Caco-2 (cell line): ENCODE measurements at regions of chr5 and their contacts with region 1.

Region 1: DNA sequence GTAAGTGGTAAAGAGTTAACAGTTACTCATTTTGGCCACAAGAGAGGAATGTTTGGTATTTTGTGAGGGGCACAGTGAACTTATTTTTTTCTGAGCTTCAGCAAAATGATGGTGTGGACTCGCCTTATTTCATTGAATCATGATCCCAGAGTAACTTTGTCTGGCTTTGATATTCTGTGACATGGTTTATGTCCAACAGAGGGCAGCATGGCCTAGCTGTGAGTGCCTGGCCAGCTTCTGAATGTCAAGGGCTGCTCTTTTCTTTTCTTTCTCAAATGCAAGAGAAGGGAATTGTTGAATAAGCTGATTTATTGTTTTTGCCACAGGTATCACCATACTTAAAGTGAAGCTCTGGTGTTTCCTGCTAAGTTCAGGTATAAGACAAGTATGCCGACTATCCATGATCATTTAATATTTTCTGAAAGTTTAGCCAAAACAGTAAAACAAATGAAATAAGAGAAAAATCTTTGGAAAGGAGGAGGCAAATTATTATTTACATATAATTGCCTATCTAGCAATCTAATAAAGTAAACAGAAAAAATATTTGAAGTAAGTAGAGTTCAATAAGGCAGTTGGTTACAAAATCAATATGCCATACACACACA is 31.7 kb downstream of the MRPL22 start:
- DNase-seq: peak in 1 of 2 experiments; percentile 50
- H3K4me3 ChIP-seq: no peak overlapping the region
- H3K4me3 Mint-ChIP-seq: no peak overlapping the region
- H3K27ac Mint-ChIP-seq: no peak overlapping the region
- H3K4me1 ChIP-seq: no peaks in the 10 kb centered on the region
- H3K4me1 Mint-ChIP-seq: no peaks in the 10 kb centered on the region
- H3K27me3 ChIP-seq: no peaks in the 10 kb centered on the region
- H3K27me3 Mint-ChIP-seq: no peaks in the 10 kb centered on the region
- CTCF ChIP-seq: peak; percentile 64 to 80

Region 2: GRCh38 chr5:154754460-154755360 is 217.9 kb before region 1 on chr5:
- CTCF ChIA-PET with region 1: no interaction called
- POLR2A ChIA-PET with region 1: no interaction called
- intact Hi-C with region 1: no loop called
- DNase-seq: peak; percentile 100
- H3K4me3 ChIP-seq: peak overlapping the region; percentile 68
- H3K4me3 Mint-ChIP-seq: peak overlapping the region; percentile 85
- H3K27ac Mint-ChIP-seq: peak overlapping the region; percentile 90
- H3K4me1 ChIP-seq: peaks cover 18% of the 10 kb centered on the region
- H3K4me1 Mint-ChIP-seq: peaks cover 22% of the 10 kb centered on the region
- H3K27me3 ChIP-seq: no peaks in the 10 kb centered on the region
- H3K27me3 Mint-ChIP-seq: no peaks in the 10 kb centered on the region
- CTCF ChIP-seq: peak; percentile 42 to 62

Region 3: DNA sequence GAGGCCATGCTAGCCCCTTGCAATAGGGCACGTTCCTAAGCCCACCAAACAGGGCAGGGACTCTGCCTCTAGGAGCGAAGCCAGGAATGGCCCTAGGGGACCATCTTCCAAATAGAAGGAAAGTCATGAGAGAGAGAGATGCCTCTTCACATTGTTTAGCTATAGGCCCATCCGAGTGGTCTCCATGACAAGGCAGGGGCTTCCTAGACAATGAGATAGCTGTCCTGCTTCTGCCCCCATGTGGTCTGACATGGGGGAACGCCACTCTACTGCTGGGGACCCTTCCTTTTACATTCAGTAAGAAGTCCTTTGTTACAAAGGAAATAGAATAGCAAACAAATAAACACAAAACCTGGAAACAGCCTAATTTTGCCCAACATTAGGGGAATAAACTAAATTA is 23.1 kb after region 1 on chr5:
- CTCF ChIA-PET with region 1: interaction called, 10 read pairs
- POLR2A ChIA-PET with region 1: no interaction called
- intact Hi-C with region 1: loop called (anchors 2 kb)
- DNase-seq: no peak
- H3K4me3 ChIP-seq: no peak overlapping the region
- H3K4me3 Mint-ChIP-seq: no peak overlapping the region
- H3K27ac Mint-ChIP-seq: no peak overlapping the region
- H3K4me1 ChIP-seq: no peaks in the 10 kb centered on the region
- H3K4me1 Mint-ChIP-seq: no peaks in the 10 kb centered on the region
- H3K27me3 ChIP-seq: no peaks in the 10 kb centered on the region
- H3K27me3 Mint-ChIP-seq: no peaks in the 10 kb centered on the region
- CTCF ChIP-seq: peak in 1 of 2 experiments; percentile 24

Region 4: DNA sequence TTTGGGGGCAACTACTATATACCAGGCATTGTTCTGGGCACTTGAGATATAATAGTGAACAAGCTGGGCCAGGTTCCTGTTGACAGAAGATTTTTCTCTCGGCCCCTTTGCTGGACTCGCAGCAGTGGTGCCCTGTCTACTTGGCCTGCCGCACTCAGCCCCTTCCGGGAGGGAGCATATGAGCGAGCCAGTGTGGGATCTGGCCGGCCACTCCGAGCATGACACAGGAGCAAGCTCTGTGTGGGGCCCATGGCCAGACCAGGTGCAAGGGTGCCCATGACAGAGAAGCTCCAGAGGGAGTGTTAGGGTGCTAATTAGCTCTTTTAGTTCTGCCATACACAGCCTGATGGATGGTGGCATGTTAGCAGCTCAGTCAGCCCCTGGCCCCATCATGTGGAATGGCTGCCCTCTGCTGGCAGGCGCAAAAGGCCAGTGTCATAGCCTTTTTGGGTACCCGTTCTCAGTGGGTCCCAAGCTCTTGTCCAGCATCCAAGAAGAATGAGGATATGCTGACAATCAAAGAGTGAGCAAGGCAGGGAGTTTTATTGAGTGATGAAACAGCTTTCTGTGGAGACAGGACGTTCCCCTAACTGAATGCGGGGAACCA is 31.7 kb after region 1 on chr5:
- CTCF ChIA-PET with region 1: interaction called, 14 read pairs
- POLR2A ChIA-PET with region 1: no interaction called
- intact Hi-C with region 1: loop called (anchors 2 kb)
- DNase-seq: peak in 1 of 2 experiments; percentile 39
- H3K4me3 ChIP-seq: no peak overlapping the region
- H3K4me3 Mint-ChIP-seq: no peak overlapping the region
- H3K27ac Mint-ChIP-seq: no peak overlapping the region
- H3K4me1 ChIP-seq: no peaks in the 10 kb centered on the region
- H3K4me1 Mint-ChIP-seq: no peaks in the 10 kb centered on the region
- H3K27me3 ChIP-seq: no peaks in the 10 kb centered on the region; the same call in 1 of the 2 replicates
- H3K27me3 Mint-ChIP-seq: peaks cover 6% of the 10 kb centered on the region
- CTCF ChIP-seq: peak; percentile 48 to 50

Region 5: DNA sequence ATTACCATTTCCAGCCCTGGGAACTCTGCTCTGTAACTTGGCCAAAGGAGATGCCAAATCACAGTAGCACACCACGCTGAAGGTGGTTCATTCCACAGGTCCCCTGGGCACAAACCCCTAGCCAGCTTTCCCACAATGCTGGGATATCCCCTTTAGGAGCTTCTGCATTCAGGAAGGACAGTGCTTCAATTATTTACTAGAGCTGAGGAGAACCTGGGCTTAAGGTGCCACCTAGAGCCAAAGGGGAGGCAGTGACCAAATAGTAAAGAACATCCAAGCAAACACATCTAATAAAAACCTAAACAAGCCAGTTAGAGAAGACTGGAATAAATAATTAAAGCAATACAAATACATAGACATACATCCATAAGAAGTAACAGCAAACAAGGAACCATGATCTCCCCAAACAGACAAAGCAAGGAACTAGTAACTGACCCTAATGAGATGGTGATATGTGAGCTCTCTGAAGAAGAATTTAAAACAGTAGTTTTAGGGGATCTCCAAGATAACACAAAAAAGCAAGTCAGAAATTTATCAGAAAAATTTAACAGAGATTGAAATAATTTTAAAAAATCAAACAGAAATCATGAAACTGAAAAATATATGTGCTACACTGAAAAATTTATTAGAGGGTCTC is 55.5 kb after region 1 on chr5:
- CTCF ChIA-PET with region 1: interaction called, 21 read pairs
- POLR2A ChIA-PET with region 1: no interaction called
- intact Hi-C with region 1: loop called (anchors 1 kb)
- DNase-seq: peak in 1 of 2 experiments; percentile 48
- H3K4me3 ChIP-seq: no peak overlapping the region
- H3K4me3 Mint-ChIP-seq: no peak overlapping the region
- H3K27ac Mint-ChIP-seq: no peak overlapping the region
- H3K4me1 ChIP-seq: no peaks in the 10 kb centered on the region
- H3K4me1 Mint-ChIP-seq: no peaks in the 10 kb centered on the region
- H3K27me3 ChIP-seq: peaks cover under 1% of the 10 kb centered on the region; the same call in 1 of the 2 replicates
- H3K27me3 Mint-ChIP-seq: peaks cover 7% of the 10 kb centered on the region
- CTCF ChIP-seq: peak; percentile 33 to 65

Region 6: DNA sequence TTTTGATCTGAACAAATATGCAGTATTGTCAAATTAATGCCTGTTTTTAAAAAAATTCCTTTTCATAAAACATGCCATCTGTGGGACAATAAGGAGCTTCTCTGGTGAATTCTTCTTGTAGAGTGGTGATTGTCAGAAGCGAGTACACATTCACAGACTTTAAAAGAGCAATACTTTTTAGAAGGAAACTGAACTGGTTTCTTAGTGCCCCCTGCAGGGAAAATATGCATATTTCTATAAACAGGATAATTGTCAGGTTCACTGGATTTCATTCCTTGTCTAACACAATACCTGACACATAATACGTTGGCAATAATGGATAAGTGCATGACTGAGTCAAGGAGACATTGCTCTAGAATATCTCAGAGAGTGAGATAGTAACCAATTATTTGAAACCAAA is 174.6 kb after region 1 on chr5:
- CTCF ChIA-PET with region 1: no interaction called
- POLR2A ChIA-PET with region 1: no interaction called
- intact Hi-C with region 1: loop called (anchors 1 kb)
- DNase-seq: no peak
- H3K4me3 ChIP-seq: no peak overlapping the region
- H3K4me3 Mint-ChIP-seq: no peak overlapping the region
- H3K27ac Mint-ChIP-seq: no peak overlapping the region
- H3K4me1 ChIP-seq: no peaks in the 10 kb centered on the region
- H3K4me1 Mint-ChIP-seq: no peaks in the 10 kb centered on the region
- H3K27me3 ChIP-seq: 0 out of 2 replicates have a peak, but pooled peaks cover 2% of the 10 kb centered on the region
- H3K27me3 Mint-ChIP-seq: peaks cover 10% of the 10 kb centered on the region
- CTCF ChIP-seq: peak; percentile 25 to 37